Gastrocnemius medialis (tissue), 4 donors: ENCODE measurements at regions of chr12 and their contacts with region 1.

Region 1: DNA sequence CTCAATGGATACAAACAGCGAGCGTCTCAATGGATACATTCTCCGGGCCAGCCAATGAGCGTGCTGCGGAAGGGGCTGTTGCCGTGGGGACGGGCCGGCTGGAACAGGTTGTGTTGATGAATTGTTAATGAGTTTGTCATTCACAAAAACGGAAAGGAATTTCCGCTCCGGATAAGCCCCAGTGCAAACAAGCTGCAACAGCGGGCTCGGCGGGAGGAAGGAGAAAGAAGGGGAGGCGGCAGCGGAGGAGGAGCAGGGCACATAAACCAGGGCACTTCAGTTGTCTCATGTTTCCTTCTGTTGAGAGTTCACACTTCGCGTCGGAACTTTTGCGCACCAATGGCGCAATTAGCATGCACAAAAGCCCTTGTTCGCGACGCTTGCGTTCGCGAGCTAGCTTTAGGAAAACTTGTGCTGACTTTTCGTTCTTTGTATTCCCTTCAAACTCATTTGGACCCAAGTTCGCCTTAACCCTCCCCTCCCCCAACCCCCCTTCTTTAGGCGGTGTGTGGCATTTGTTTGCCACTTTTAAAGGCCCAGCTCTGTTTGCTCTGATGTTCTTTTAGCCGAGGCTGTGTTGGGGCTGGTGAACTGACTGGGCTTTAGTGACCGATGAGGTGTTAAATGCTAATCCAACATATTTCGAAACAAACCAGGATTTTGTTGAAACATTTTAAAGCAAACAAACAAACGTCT is at the start of gene DUSP6:
- DNase-seq: peak; percentile 75 to 80
- ATAC-seq: peak; percentile 66 to 67
- H3K4me3 ChIP-seq: peak within 1 kb of the TSS; percentile 71 to 77 (median 74)
- H3K27ac ChIP-seq: peak within 1 kb of the TSS; percentile 78 to 85 (median 82)
- H3K4me1 ChIP-seq: peaks cover 4 to 32% of the 10 kb centered on the region in 2 donors
- H3K27me3 ChIP-seq: peaks cover 50 to 88% (median 77%) of the 10 kb centered on the region in 3 donors
- CTCF ChIP-seq: no peak
- POLR2A ChIP-seq: peak; percentile 37 to 54
- total RNA-seq, gene DUSP6: 4.2 to 23.8 (median 12.1) TPM

Region 2: DNA sequence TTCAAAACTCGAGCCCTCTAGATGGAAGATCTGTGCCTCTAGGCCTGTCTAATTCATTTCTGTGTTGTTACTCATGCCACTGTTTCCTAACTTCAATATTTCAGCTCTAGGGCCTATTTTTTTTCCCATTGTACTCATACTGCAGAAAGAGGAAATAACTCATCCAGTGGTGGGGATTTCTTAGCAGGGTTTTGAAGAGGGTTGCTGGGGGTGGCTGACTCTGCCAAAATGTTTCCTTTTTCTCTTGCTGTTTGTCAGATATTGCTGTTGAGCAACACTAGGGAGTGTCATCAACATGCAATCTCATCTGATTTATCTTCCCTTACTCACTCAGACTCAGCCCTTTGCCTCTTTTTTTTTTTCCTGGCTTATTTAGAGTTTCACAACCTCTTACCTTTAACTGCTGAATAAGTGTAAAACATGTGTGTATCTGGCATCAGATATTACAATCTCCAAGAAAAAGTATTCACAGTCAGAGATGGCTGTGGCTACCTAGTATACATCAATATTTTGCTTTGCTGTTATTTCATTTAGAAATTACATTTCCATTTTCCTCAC is 189.9 kb before region 1 on chr12:
- in situ Hi-C with region 1: no loop called
- intact Hi-C with region 1: loop called (anchors 5 kb)
- DNase-seq: peak; percentile 55 to 70
- ATAC-seq: peak; percentile 88 to 93
- H3K4me3 ChIP-seq: no peak overlapping the region
- H3K27ac ChIP-seq: peak overlapping the region; percentile 43 to 62 (median 52)
- H3K4me1 ChIP-seq: peaks cover 0 to 13% of the 10 kb centered on the region in 2 donors
- H3K27me3 ChIP-seq: no peaks in the 10 kb centered on the region
- CTCF ChIP-seq: no peak
- POLR2A ChIP-seq: no peak

Region 3: GRCh38 chr12:89179983-89180382 is 172.7 kb before region 1 on chr12:
- in situ Hi-C with region 1: no loop called
- intact Hi-C with region 1: loop called (anchors 5 kb)
- DNase-seq: peak; percentile 49 to 53
- ATAC-seq: peak; percentile 75 to 77
- H3K4me3 ChIP-seq: no peak overlapping the region
- H3K27ac ChIP-seq: no peak overlapping the region
- H3K4me1 ChIP-seq: peaks cover 0 to 11% of the 10 kb centered on the region in 2 donors
- H3K27me3 ChIP-seq: no peaks in the 10 kb centered on the region
- CTCF ChIP-seq: no peak
- POLR2A ChIP-seq: no peak